Aorta (tissue), 5 donors: ENCODE measurements at regions of chr1 and their contacts with region 1.

Region 1: DNA sequence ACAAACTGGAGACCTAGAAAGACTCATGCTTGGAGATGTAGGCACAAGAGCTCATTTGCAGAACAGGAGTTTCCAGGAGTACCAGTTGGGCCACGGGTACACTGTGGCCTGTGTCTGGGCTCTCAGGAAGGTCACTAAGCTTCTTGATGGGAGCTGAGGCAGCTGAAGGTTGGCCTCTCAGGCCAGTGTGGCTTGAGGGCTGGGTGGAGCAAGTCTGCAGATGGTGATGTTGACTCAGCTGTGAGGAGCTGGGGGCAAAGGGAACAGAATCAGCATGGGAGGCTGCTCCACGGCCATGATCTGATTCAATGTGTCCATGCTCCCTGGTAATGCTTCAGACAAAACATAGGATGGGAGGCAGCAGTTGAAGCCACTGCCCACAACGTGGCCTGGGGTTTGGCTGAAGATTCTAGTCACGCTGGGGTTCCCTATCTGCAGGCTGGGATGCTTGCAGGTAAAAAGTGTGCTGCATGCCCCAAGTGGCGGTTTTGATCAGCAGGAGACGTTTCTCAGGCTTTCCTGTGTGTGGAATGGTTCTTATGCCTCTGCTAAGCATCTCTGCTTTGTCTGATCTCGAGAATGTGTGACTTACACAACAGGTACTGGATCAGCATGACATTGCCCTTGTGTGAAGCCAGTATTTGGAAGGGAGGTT is 15.4 kb upstream of the TENT5C start:
- DNase-seq: no peak
- ATAC-seq: no peak
- H3K4me3 ChIP-seq: no peak overlapping the region
- H3K27ac ChIP-seq: no peak overlapping the region
- H3K4me1 ChIP-seq: no peaks in the 10 kb centered on the region
- H3K27me3 ChIP-seq: no peaks in the 10 kb centered on the region

Region 2: DNA sequence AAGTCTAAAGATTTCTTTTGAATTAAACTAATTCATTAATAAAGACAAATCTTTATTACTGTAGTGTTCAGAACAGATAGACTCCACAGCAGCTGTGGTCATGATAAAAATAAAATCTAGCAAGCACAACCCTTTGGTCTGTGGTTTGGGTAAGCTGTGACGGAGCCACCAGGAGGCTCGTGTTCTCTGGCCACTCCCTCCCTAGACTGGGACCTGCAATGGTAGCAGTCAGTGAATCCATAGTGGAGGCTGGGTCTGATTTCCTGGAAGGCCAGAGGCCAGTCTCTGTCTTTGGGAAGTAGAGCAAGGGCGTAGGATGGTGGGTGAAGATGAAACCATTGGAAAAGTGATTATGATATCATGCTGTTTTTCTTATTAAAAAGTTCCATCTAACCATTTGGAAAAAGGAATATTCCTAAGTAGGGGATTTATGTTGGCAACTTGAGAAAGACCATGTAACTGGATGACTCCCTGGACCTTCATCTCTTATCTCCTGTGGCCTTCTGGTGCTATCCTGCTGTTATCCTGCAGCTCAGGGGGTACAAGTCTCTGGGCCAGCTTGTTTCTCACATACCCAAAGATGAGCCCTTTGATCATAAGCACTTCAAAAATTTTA is 54.4 kb after region 1 on chr1:
- intact Hi-C with region 1: no loop called
- DNase-seq: no peak
- ATAC-seq: no peak
- H3K4me3 ChIP-seq: no peak overlapping the region
- H3K27ac ChIP-seq: no peak overlapping the region
- H3K4me1 ChIP-seq: no peaks in the 10 kb centered on the region
- H3K27me3 ChIP-seq: no peaks in the 10 kb centered on the region

Region 3: DNA sequence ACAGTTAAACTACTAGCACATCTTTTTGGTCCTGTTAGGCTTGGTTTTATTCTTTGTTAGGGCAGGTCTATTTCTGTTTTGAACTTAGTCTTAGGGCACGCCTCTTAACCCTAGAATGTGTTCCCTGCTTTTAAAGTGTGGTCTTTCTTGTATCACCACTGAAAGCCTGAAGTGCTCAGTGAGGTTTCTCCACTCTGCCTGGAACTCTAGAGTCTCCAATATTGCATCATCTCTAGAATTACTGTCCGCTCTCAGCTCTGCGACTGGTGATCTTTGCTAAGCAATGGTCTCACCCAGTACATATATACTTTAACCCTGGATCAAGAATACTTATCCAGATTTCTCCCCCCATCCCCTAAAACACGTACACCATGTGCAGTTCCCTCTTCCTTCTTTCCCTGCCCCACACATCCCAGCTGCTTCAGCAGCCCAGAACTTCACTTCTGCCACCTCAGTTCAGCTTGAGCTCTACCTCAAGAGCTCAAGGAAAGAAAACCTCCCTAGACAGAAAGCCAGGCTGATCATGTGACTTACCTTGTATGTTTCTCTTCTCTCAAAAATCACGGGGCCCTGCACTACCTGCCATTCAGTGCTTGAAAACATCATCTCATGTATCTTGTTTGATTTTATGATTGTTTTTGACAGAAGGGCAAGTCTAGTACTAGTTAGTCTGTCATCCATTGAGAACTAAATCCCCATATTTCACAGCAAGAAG is 75.3 kb after region 1 on chr1:
- intact Hi-C with region 1: loop called in 1 of 2 experiments (anchors 5 kb)
- DNase-seq: no peak
- ATAC-seq: no peak
- H3K4me3 ChIP-seq: no peak overlapping the region
- H3K27ac ChIP-seq: no peak overlapping the region
- H3K4me1 ChIP-seq: peaks cover 0 to 1% of the 10 kb centered on the region in 2 donors
- H3K27me3 ChIP-seq: peaks cover 0 to 1% of the 10 kb centered on the region in 2 donors

Region 4: GRCh38 chr1:117795190-117795589 is 204.8 kb after region 1 on chr1:
- intact Hi-C with region 1: no loop called
- DNase-seq: no peak
- ATAC-seq: peak; percentile 80
- H3K4me3 ChIP-seq: no peak overlapping the region
- H3K27ac ChIP-seq: no peak overlapping the region
- H3K4me1 ChIP-seq: peaks cover 0 to 4% of the 10 kb centered on the region in 2 donors
- H3K27me3 ChIP-seq: no peaks in the 10 kb centered on the region